ENCODE measurements at regions of chr3 and their contacts with region 1.

Region 1: GRCh38 chr3:30012941-30013543 is 593.4 kb upstream of the TGFBR2 start:
- DNase-seq: peak; percentile 31 to 63 (median 35)
- ATAC-seq: peak; percentile 70; the same call in 2 of the 3 replicates
- H3K4me3 ChIP-seq: no peak overlapping the region
- H3K27ac ChIP-seq: no peak overlapping the region
- H3K4me1 ChIP-seq: no peaks in the 10 kb centered on the region
- H3K27me3 ChIP-seq: no peaks in the 10 kb centered on the region
- CTCF ChIP-seq: peak in 2 of 3 experiments; percentile 55 to 57; a peak in 5 of 6 replicates
- EP300 ChIP-seq: no peak
- POLR2A ChIP-seq: no peak
- RAD21 ChIP-seq: peak; percentile 68 to 80

Region 2: GRCh38 chr3:30199096-30199759 is 186.2 kb after region 1 on chr3:
- CTCF ChIA-PET with region 1: interaction called, 4 read pairs
- POLR2A ChIA-PET with region 1: no interaction called
- in situ Hi-C with region 1: no loop called
- intact Hi-C with region 1: loop called (anchors 1 kb)
- DNase-seq: peak; percentile 20 to 70 (median 42)
- ATAC-seq: peak; percentile 69; the same call in 2 of the 3 replicates
- H3K4me3 ChIP-seq: no peak overlapping the region
- H3K27ac ChIP-seq: no peak overlapping the region
- H3K4me1 ChIP-seq: no peaks in the 10 kb centered on the region
- H3K27me3 ChIP-seq: no peaks in the 10 kb centered on the region
- CTCF ChIP-seq: peak; percentile 42 to 70 (median 60); a peak in 5 of 6 replicates
- EP300 ChIP-seq: no peak
- POLR2A ChIP-seq: no peak
- RAD21 ChIP-seq: peak; percentile 81 to 83

Region 3: DNA sequence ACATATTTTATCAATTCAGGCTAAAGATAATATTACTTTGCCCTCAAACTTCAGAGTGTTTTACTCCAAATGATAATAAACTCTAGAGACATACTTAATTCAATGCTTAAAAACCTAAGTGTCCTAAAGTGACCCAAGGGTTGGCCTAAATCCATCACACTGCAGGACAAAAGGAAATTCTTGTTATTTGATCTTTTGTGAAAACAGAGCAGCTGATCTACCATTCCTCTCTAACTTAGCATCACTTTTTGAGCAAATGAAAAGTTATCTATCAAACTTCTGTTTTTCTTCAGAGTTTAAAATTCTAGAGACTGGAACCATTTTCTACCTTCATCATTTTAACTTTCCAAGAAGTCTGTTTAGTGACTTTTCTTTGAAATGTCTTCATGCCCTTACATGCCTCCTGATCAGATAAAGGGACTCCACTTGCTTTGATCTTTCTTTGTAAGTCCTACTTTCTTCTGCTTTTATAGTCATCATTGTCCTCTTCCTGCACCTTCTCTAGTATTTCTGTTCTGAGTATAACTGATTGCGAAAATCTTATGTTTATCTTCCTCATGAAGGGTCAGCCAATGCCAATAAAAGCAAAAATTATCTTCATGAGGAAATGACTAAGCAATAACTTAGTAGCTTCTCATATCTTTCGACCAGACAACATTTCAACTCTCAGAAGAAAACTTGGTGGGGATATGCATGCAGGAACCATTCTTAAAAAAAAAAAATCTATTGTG is 214.7 kb after region 1 on chr3:
- CTCF ChIA-PET with region 1: no interaction called
- POLR2A ChIA-PET with region 1: no interaction called
- in situ Hi-C with region 1: no loop called
- intact Hi-C with region 1: no loop called
- DNase-seq: no peak
- ATAC-seq: no peak
- H3K4me3 ChIP-seq: no peak overlapping the region
- H3K27ac ChIP-seq: no peak overlapping the region
- H3K4me1 ChIP-seq: no peaks in the 10 kb centered on the region
- H3K27me3 ChIP-seq: no peaks in the 10 kb centered on the region
- CTCF ChIP-seq: no peak
- EP300 ChIP-seq: no peak
- POLR2A ChIP-seq: no peak
- RAD21 ChIP-seq: peak in 1 of 2 experiments; percentile 13; a peak in 1 of 4 replicates

Region 4: DNA sequence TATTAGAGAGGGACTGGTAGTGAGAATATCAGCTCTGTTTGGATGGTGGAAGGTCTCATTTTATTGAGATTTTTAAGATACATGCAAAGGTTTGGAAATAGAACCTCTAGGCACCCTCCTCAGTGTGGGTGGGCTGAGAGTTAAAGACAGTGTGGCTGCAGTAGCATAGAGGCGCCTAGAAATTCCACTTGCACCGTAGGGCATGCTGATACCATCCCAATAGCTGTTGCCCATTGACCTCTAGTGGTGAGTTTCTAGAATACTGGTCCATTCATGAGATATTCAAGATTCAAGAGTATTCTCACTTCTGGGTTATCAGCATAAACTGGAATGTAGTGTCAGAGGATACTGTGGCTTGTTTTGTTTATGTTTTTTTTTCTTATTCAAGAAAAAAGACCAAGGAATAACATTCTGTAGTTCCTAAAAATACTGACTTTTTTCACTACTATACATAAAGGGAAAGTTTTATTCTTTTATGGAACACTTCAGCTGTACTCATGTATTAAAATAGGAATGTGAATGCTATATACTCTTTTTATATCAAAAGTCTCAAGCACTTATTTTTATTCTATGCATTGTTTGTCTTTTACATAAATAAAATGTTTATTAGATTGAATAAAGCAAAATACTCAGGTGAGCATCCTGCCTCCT is 680.6 kb after region 1 on chr3:
- CTCF ChIA-PET with region 1: no interaction called
- POLR2A ChIA-PET with region 1: no interaction called
- in situ Hi-C with region 1: no loop called
- intact Hi-C with region 1: loop called (anchors 5 kb)
- DNase-seq: peak; percentile 17 to 34 (median 18)
- ATAC-seq: peak; percentile 77
- H3K4me3 ChIP-seq: no peak overlapping the region
- H3K27ac ChIP-seq: no peak overlapping the region
- H3K4me1 ChIP-seq: no peaks in the 10 kb centered on the region
- H3K27me3 ChIP-seq: no peaks in the 10 kb centered on the region
- CTCF ChIP-seq: peak in 2 of 3 experiments; percentile 46 to 54; a peak in 4 of 6 replicates
- EP300 ChIP-seq: no peak
- POLR2A ChIP-seq: no peak
- RAD21 ChIP-seq: peak; percentile 85 to 89

Measured in K562 (cell line).